Endothelial cell of umbilical vein (primary cell): ENCODE measurements at regions of chr4 and their contacts with region 1.

Region 1: GRCh38 chr4:28432348-28433025 is 1571.8 kb downstream of the STIM2 start:
- DNase-seq: no peak
- H3K4me3 ChIP-seq: no peak overlapping the region
- H3K27ac ChIP-seq: no peak overlapping the region
- H3K4me1 ChIP-seq: no peaks in the 10 kb centered on the region
- H3K27me3 ChIP-seq: no peaks in the 10 kb centered on the region
- CTCF ChIP-seq: no peak
- POLR2A ChIP-seq: no peak

Region 2: DNA sequence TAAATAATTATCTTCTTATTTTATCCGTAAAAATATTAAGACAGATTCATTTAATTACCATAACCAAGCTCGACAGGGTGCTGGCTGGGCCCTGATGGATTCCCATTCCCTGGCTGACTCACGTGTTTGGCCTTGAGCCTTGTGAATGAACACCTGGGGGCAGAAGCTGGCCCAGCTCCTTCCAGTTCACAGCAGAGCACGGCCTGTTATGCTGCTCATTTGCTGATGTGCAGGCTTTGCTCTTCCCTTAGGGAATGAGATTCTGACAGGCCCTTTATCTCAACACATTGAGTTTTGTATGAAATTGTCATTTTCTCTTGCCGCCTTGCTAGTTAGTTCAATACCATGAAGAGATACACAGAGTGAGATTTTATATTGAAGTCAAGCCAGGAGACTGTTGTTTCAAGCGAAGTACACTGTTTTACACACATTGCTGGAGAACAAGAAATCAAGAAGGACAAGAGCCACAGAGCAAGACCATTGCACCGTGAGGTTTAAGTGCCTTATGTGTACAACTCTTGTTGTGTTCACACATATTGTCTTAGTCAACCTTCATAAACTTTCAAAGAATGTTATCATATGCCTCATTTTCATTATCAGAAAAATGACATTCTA is 11.4 kb after region 1 on chr4:
- CTCF ChIA-PET with region 1: interaction called, 4 read pairs
- POLR2A ChIA-PET with region 1: interaction called, 13 read pairs
- dilution Hi-C with region 1: no loop called
- intact Hi-C with region 1: no loop called
- DNase-seq: no peak
- H3K4me3 ChIP-seq: no peak overlapping the region
- H3K27ac ChIP-seq: no peak overlapping the region
- H3K4me1 ChIP-seq: peaks cover 2% of the 10 kb centered on the region
- H3K27me3 ChIP-seq: no peaks in the 10 kb centered on the region
- CTCF ChIP-seq: no peak
- POLR2A ChIP-seq: no peak

Region 3: DNA sequence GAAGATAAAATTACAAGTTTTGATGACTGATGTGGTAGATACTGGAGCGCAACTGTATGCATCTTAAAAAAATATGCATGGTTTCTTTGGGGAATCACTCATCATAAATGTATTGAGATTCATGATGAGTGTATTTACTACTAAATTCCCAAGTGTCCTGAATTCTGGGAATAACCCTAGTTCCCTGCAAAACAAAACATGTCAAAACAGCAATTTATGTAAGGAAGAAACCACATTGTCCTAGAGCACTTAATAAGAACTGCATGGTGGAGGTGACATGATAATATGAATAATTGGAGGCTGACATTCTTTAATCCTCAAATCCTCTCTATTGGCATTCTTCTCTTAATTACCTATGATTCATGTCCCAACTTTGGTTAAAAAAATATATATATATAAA is 232.8 kb after region 1 on chr4:
- CTCF ChIA-PET with region 1: no interaction called
- POLR2A ChIA-PET with region 1: no interaction called
- dilution Hi-C with region 1: no loop called
- intact Hi-C with region 1: no loop called
- DNase-seq: no peak
- H3K4me3 ChIP-seq: no peak overlapping the region
- H3K27ac ChIP-seq: no peak overlapping the region
- H3K4me1 ChIP-seq: no peaks in the 10 kb centered on the region
- H3K27me3 ChIP-seq: no peaks in the 10 kb centered on the region
- CTCF ChIP-seq: no peak
- POLR2A ChIP-seq: no peak